Psoas muscle (tissue), 8 donors: ENCODE measurements at regions of chr4 and their contacts with region 1.

Region 1: DNA sequence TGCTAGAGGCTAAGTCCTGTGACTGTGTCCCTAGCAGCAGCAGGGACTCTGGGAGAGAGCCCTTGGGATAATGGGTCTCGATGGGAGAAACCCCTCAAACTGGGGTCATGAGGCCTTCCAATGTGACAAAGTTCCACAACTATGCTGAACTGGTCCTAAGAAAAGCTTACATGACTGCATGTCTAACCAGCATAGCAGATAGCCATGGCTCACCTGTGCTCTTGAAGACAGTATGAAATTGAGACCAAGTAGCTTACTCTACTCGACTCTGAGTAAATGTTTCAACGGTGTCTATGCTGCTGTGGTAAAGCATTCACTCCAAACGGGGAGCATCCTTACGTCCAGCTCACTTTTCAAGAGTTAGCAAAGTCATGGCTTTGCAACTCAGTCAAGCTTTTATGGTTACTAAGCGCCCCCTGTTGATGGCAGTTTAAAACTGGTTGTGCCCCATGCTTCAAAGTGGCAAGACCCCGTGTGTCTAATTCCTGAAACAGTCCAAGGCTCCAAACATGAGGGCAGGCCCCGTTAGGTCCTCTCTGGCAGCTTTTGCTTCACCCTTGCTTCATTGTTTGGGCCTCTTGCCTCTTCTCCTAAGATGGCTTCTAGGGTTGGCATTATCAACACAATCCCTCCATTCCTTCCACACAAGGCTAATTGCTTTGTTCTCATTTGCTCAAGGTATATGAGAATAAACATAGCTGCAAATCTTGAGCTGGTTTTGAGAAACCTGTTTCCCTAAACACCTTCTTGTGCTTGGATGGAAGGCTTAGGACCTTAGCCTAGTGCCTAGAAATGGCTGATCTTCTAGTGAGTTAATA is 46.6 kb downstream of the CCNG2 start:
- DNase-seq: peak; percentile 26 to 58
- ATAC-seq: peak; percentile 76 to 92 (median 80)
- H3K4me3 ChIP-seq: no peak overlapping the region
- H3K27ac ChIP-seq: no peak overlapping the region
- H3K4me1 ChIP-seq: no peaks in the 10 kb centered on the region
- H3K27me3 ChIP-seq: no peaks in the 10 kb centered on the region
- CTCF ChIP-seq: peak; percentile 74

Region 2: DNA sequence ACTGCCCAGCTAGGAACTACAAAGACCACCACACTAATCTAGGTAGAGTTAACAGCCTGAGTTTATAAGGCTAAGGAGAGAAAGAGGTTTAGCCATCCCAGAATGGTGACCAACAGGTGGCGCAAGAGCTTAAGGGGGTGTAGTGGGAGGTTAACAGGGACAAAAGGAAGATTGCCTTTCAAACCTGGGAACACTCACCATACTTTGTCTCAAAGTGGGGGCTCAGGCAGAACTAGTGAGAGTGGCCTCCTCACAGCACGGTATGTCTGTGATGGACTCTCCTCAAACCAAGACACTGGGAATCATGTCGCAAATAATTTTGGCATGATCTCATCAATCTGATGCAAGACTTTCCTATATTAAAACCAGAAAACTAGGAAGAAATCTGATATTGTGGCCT is 151.2 kb before region 1 on chr4:
- intact Hi-C with region 1: loop called in 1 of 2 experiments (anchors 5 kb)
- DNase-seq: no peak
- ATAC-seq: peak in 3 of 4 donors; percentile 37 to 55 (median 48)
- H3K4me3 ChIP-seq: no peak overlapping the region
- H3K27ac ChIP-seq: no peak overlapping the region
- H3K4me1 ChIP-seq: peaks cover 9% of the 10 kb centered on the region
- H3K27me3 ChIP-seq: no peaks in the 10 kb centered on the region
- CTCF ChIP-seq: peak; percentile 39

Region 3: DNA sequence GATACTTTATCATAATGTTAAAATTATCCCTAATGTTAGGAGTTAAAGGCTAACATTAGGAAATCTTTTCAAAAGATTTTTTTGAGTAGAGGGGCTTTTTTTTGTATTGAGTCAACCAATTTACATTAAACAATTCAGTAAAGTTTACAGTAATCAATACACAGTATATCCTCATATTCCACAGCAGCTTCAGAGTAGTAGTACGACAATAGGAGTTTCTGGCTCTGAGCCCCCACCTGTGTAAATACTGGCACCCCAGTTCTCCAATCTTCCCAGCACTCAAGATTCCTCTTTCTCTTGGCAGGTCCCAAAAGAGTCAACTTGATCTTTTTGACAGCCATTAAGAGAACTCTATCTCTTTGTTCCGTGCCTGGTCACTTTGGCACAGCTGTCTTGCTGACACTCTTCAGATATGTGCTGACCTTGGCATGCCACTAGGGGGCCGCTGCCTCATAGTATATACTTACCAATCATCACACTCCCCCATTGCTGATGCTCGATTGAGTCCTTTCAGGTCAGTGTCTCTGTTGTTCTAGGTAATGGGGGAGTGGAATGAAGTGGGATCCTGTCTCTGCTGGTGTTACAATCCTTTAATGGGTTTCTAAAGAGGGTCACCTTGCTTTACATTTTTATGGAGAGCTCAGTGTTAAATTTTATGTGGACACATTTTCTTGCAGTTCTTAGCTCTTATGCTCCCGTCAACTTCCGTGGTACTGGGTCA is 108.3 kb before region 1 on chr4:
- intact Hi-C with region 1: loop called (anchors 2 to 5 kb)
- DNase-seq: peak; percentile 70 to 85
- ATAC-seq: peak; percentile 94 to 99 (median 96)
- H3K4me3 ChIP-seq: no peak overlapping the region
- H3K27ac ChIP-seq: no peak overlapping the region
- H3K4me1 ChIP-seq: no peaks in the 10 kb centered on the region
- H3K27me3 ChIP-seq: no peaks in the 10 kb centered on the region
- CTCF ChIP-seq: peak; percentile 80

Region 4: GRCh38 chr4:77146186-77147078 is 57.2 kb before region 1 on chr4:
- intact Hi-C with region 1: no loop called
- DNase-seq: no peak
- ATAC-seq: no peak
- H3K4me3 ChIP-seq: no peak overlapping the region
- H3K27ac ChIP-seq: no peak overlapping the region
- H3K4me1 ChIP-seq: no peaks in the 10 kb centered on the region
- H3K27me3 ChIP-seq: no peaks in the 10 kb centered on the region
- CTCF ChIP-seq: no peak